ENCODE measurements at regions of chr12 and their contacts with region 1.

Region 1: DNA sequence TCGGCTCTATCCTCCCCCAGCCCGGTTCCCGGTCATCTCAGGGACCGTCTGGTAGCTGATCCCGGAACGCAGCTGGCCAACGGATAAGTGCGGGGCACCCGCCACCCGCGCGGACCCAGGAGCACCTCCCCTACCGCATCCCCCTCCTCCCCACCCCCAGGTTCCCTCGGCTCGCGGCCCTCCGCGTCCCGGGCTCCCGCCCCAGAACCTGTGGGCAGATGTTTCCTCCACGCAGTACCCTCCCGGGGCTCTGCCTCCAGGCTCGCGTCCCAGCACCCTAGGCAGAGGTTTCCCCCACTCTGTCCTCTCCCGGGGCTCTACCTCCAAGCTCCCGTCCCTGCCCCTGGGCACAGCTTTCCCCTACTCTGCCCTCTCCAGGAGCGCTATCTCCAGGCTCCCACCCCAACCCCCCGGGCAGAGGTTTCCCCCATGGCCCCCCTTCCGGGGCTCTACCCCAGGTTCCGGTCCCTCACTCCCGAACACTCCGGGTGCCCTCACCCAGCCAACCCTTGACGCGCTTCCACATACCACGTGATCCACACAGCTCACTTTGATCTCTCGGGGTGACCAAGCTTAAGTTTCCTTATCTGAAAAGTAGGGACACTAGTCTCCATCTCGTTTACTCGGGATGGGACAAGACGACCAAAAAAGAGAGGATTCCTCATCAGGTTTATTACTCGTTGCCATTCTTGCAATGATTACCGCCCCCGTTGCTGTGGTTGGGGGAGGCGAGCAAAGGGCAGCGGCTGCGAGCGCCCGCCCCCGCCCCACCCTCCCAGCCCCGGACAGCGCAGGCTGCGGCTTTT is at the start of gene CCDC38:
- DNase-seq: peak; percentile 77
- H3K4me3 Mint-ChIP-seq: peak within 1 kb of the TSS; percentile 82
- H3K27ac Mint-ChIP-seq: peak within 1 kb of the TSS; percentile 76
- H3K4me1 Mint-ChIP-seq: peaks cover 5% of the 10 kb centered on the region
- H3K27me3 Mint-ChIP-seq: peaks cover 18% of the 10 kb centered on the region
- total RNA-seq, gene CCDC38: 0.07 TPM in 1 of 2 replicates, not detected in the other

Region 2: DNA sequence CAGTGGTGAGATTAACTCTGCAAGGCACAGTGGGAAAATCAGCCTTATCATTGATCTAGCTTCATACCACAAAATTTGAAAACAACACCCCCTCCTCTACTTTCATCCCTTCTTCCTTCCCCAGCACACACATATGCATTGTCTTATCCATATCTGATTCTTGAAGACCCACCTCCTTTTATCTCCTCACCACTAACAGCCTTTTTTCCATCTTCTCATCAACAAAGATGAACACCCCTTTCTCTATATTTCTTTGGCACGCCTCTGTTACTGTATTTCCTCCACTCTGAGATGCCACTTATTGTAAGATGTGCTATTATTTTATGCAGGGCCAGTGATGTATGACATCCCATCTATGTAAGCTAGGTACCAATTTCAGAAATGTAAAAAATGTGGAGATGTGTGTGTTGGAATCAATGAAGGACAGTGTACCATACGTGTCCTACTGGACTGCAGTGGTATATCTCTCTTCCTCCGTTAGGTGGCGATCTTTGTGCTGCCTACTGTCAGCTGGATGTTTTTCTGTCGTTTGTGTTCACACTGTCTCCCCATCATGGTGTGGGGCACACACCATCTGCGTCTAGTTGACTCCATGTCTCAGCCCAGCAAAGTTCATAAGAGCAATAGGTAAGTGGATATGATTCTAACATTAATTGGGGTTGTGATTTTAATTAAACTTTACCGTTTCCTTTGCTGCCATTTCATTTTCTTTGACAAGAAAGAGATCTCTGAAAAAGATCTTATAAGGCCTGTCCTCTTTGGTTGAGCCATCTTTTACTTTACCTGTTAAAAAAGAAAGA is 24.3 kb before region 1 on chr12:
- intact Hi-C with region 1: loop called (anchors 1 kb)
- DNase-seq: peak; percentile 34
- H3K4me3 Mint-ChIP-seq: no peak overlapping the region
- H3K27ac Mint-ChIP-seq: no peak overlapping the region
- H3K4me1 Mint-ChIP-seq: no peaks in the 10 kb centered on the region
- H3K27me3 Mint-ChIP-seq: peaks cover 18% of the 10 kb centered on the region

Region 3: DNA sequence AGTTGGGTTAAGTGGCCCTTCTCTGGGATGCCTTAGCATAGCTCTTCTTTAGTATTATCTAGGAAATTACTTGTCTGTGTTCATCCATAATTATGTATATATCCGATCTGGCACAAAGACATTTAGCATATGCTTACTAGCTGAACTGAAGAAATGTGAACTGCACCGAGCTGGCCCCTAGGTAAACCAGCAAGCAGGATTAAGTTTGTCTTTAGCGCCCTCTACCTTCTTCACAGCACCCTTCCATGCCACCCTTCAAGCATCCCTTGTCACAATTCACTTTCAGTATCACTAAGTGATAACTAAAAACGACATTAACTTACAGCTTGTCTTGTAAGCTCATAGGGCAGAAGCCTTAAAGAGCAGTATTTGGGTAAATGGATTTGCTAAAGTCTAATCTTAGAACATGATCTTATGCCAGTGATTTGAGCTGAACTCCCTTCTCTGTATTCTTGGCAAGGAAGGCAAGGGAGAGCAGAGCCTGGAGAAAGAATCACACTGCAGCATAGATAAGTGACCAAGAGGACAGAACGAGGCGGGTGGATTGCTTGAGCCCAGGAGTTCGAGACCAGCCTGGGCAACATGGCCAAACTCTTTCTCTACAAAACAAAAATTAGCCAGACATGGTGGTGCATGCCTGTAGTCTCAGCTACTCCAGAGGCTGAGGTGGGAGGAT is 56.0 kb after region 1 on chr12:
- intact Hi-C with region 1: loop called (anchors 2 kb)
- DNase-seq: peak; percentile 49
- H3K4me3 Mint-ChIP-seq: no peak overlapping the region
- H3K27ac Mint-ChIP-seq: peak overlapping the region; percentile 24
- H3K4me1 Mint-ChIP-seq: peaks cover 15% of the 10 kb centered on the region
- H3K27me3 Mint-ChIP-seq: no peaks in the 10 kb centered on the region

Region 4: GRCh38 chr12:96035278-96036236 is 92.8 kb after region 1 on chr12 and contains the start of gene LTA4H:
- intact Hi-C with region 1: loop called (anchors 1 kb)
- DNase-seq: peak; percentile 94
- H3K4me3 Mint-ChIP-seq: no peak within 1 kb of the TSS
- H3K27ac Mint-ChIP-seq: no peak within 1 kb of the TSS
- H3K4me1 Mint-ChIP-seq: peaks cover 8% of the 10 kb centered on the region
- H3K27me3 Mint-ChIP-seq: no peaks in the 10 kb centered on the region
- total RNA-seq, gene LTA4H: 63.6 and 65.2 TPM in 2 replicates

Region 5: GRCh38 chr12:96132819-96133218 is 190.1 kb after region 1 on chr12:
- intact Hi-C with region 1: no loop called
- DNase-seq: no peak
- H3K4me3 Mint-ChIP-seq: no peak overlapping the region
- H3K27ac Mint-ChIP-seq: no peak overlapping the region
- H3K4me1 Mint-ChIP-seq: peaks cover 14% of the 10 kb centered on the region
- H3K27me3 Mint-ChIP-seq: peaks cover 11% of the 10 kb centered on the region